Posterior vena cava (tissue), 2 donors: ENCODE measurements at regions of chr2 and their contacts with region 1.

Region 1: DNA sequence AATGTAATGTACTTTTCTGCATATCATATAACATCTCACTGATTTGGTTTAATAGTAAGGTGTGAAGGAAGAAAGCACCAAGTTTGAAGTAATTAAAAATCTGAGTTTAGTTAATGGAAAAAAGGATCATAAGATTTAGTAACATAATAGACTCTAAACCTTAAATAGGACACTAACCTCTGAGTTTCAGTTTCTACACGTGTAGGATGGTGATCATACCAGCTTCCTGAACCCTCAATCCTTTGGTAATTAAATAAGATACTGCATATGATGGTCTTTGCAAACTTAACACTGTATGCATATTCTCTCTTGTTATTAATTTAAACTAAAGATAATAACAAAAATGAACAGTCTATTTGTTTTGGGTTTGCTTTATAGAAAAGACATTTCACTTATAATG is 216.8 kb downstream of the NUP35 start:
- DNase-seq: no peak

Region 2: GRCh38 chr2:183409662-183410061 is 68.6 kb after region 1 on chr2:
- intact Hi-C with region 1: loop called in 1 of 2 experiments (anchors 2 kb)
- DNase-seq: no peak

Region 3: DNA sequence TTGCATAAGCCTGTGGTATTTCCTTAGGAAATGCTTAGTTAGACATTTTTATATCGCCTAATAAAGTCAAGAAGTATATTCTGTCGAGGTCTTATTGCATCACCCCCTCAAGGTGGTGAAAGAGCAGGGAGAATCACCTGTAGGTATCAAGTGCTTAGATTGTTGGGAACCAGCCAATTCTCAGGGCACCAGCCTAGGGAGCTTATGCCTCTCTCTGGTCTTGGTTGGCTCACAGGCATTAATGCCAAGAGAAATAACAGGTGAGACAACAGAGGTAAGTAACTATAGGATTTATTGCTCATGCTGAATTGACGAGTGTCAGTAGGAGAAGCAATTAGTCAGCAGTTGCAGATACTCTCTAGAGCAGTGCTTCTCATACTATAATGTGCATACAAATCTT is 593.9 kb after region 1 on chr2:
- intact Hi-C with region 1: no loop called
- DNase-seq: no peak